IMR-90 (cell line): ENCODE measurements at regions of chr7 and their contacts with region 1.

Region 1: DNA sequence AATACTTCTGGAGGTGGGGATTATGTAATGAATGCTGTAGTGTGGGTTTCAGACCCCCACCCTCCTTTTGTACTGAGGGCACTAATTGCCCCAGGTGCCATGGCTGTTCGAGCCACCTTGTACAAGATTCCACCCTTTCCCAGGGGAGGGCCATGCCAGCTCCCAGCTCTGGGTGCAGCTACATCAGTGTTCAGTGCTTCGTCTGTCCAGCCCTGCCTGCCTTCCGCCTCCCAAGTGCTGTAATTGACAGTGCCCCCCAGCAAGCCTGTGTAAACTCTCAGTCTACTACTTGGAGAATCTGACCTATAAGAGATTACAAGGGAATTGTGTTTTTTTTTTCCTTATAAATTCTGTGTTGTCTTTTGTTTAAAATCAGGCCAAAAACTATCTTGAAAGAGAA is 33.0 kb downstream of the GTF2I start:
- DNase-seq: no peak
- ATAC-seq: no peak
- H3K4me3 ChIP-seq: no peak overlapping the region
- H3K27ac ChIP-seq: no peak overlapping the region
- H3K4me1 ChIP-seq: no peaks in the 10 kb centered on the region
- H3K27me3 ChIP-seq: no peaks in the 10 kb centered on the region
- CTCF ChIP-seq: no peak
- POLR2A ChIP-seq: no peak
- RAD21 ChIP-seq: no peak

Region 2: DNA sequence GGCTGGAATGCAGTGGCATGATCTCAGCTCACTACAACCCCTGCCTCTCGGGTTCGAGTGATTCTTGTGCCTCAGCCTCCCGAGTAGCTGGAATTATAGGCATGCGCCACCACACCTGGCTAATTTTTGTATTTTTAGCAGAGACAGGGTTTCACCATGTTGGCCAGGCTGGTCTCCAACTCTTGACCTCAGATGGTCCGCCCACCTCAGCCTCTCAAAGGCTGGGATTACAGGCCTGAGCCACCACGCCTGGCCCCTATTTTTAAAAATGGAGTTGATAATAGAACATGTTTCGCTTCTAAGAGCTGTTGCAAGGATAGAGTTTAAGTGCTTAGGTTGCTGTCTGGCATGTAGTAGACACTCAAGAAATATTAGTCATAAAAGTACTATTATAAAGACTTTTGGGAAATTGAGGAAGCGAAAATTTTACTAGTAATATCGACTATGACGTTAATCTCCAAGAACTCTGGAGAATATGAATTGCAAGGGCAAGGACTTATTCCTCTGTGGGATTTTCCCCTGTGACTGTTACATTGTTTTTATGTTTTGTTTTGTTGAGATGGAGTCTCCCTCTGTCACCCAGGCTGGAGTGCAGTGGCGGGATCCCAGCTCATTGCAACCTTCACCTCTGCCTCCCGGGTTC is 25.1 kb before region 1 on chr7:
- CTCF ChIA-PET with region 1: no interaction called
- POLR2A ChIA-PET with region 1: no interaction called
- dilution Hi-C with region 1: no loop called
- in situ Hi-C with region 1: no loop called
- intact Hi-C with region 1: no loop called
- DNase-seq: no peak
- ATAC-seq: no peak
- H3K4me3 ChIP-seq: no peak overlapping the region
- H3K27ac ChIP-seq: no peak overlapping the region
- H3K4me1 ChIP-seq: peaks cover 16% of the 10 kb centered on the region
- H3K27me3 ChIP-seq: no peaks in the 10 kb centered on the region
- CTCF ChIP-seq: no peak
- POLR2A ChIP-seq: no peak
- RAD21 ChIP-seq: no peak

Region 3: DNA sequence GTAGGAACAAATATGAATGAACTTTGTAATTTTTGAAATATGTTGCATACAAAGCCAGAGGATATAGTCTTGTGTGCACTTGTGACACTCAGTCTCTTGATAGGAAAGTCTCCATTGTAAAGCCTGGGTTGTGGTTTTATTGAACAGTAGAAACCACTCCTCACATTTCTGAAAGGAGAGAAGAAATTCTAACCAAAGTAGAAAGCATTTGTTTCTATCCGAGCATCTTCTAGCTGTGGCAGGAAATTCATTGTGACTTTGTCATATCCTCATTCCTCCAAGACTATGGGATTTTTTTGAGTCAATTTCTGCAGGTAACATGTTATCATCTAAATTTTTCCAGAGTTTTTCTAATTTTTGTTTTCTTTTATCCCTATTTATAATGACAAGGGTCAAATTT is 27.9 kb after region 1 on chr7:
- CTCF ChIA-PET with region 1: no interaction called
- POLR2A ChIA-PET with region 1: no interaction called
- dilution Hi-C with region 1: no loop called
- in situ Hi-C with region 1: no loop called
- intact Hi-C with region 1: loop called (anchors 2 kb)
- DNase-seq: peak; percentile 11
- ATAC-seq: no peak; the same call in 1 of the 2 replicates
- H3K4me3 ChIP-seq: no peak overlapping the region
- H3K27ac ChIP-seq: no peak overlapping the region
- H3K4me1 ChIP-seq: peaks cover 6% of the 10 kb centered on the region
- H3K27me3 ChIP-seq: no peaks in the 10 kb centered on the region
- CTCF ChIP-seq: no peak
- POLR2A ChIP-seq: no peak
- RAD21 ChIP-seq: no peak